CD8-positive, alpha-beta T cell (primary cell): ENCODE measurements at regions of chr1 and their contacts with region 1.

Region 1: DNA sequence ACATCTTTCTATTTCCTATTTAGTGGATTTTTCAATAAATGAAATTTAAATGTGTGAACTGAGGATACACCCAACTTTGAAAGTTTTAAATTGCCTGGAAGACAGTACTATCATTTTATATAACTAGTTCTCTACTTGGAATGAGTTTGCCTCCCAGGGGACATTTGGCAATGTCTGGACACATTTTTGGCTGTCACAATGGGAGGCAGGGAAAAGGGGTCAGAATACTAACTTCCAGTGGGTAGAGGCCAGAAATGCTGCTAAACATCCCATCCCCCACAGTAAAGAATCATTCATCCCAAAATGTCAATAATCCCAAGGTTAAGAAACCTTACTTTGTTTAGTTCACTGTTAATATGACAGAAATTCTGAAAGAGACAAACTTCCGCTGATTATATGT is 13.2 kb upstream of the NRAS start:
- DNase-seq: no peak
- ATAC-seq: no peak
- H3K4me3 ChIP-seq: no peak overlapping the region
- H3K4me3 Mint-ChIP-seq: no peak overlapping the region
- H3K27ac ChIP-seq: no peak overlapping the region
- H3K27ac Mint-ChIP-seq: no peak overlapping the region
- H3K4me1 ChIP-seq: no peaks in the 10 kb centered on the region
- H3K4me1 Mint-ChIP-seq: peaks cover 2% of the 10 kb centered on the region
- H3K27me3 ChIP-seq: no peaks in the 10 kb centered on the region
- H3K27me3 Mint-ChIP-seq: no peaks in the 10 kb centered on the region
- CTCF ChIP-seq: no peak

Region 2: DNA sequence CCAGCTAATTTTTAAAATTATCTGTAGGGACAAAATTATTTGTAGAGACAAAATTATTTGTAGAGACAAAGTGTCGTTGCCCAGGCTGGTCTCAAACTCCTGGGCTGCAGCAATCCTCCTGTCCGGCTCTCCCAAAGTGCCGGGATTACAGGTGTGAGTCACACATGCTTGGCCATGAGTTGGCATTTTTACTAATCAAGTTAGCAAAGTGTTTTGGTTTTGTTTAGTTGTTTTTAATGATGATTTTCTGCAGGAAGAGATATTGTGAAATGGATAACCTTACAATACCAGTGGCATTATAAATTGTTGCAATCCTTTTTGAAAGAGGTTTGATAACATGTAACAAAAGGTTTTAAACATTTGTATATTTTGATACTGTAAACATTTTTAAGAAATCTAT is 1404.7 kb before region 1 on chr1:
- CTCF ChIA-PET with region 1: no interaction called
- POLR2A ChIA-PET with region 1: no interaction called
- intact Hi-C with region 1: no loop called
- DNase-seq: no peak
- ATAC-seq: no peak
- H3K4me3 ChIP-seq: no peak overlapping the region
- H3K4me3 Mint-ChIP-seq: no peak overlapping the region
- H3K27ac ChIP-seq: no peak overlapping the region
- H3K27ac Mint-ChIP-seq: no peak overlapping the region
- H3K4me1 ChIP-seq: no peaks in the 10 kb centered on the region
- H3K4me1 Mint-ChIP-seq: no peaks in the 10 kb centered on the region
- H3K27me3 ChIP-seq: no peaks in the 10 kb centered on the region
- H3K27me3 Mint-ChIP-seq: no peaks in the 10 kb centered on the region
- CTCF ChIP-seq: no peak

Region 3: GRCh38 chr1:114691061-114691460 is 38.7 kb before region 1 on chr1:
- CTCF ChIA-PET with region 1: no interaction called
- POLR2A ChIA-PET with region 1: no interaction called
- intact Hi-C with region 1: no loop called
- DNase-seq: no peak
- ATAC-seq: no peak
- H3K4me3 ChIP-seq: no peak overlapping the region
- H3K4me3 Mint-ChIP-seq: no peak overlapping the region
- H3K27ac ChIP-seq: no peak overlapping the region
- H3K27ac Mint-ChIP-seq: no peak overlapping the region
- H3K4me1 ChIP-seq: no peaks in the 10 kb centered on the region
- H3K4me1 Mint-ChIP-seq: no peaks in the 10 kb centered on the region
- H3K27me3 ChIP-seq: peaks cover 5 to 7% of the 10 kb centered on the region in 2 experiments
- H3K27me3 Mint-ChIP-seq: peaks cover 27% of the 10 kb centered on the region
- CTCF ChIP-seq: no peak

Region 4: GRCh38 chr1:114741963-114742746 is 12.4 kb after region 1 on chr1:
- CTCF ChIA-PET with region 1: no interaction called
- POLR2A ChIA-PET with region 1: no interaction called
- intact Hi-C with region 1: loop called in 1 of 2 experiments (anchors 2 kb)
- DNase-seq: no peak
- ATAC-seq: no peak
- H3K4me3 ChIP-seq: no peak overlapping the region
- H3K4me3 Mint-ChIP-seq: no peak overlapping the region
- H3K27ac ChIP-seq: no peak overlapping the region
- H3K27ac Mint-ChIP-seq: peak overlapping the region; percentile 30
- H3K4me1 ChIP-seq: peaks cover 16% of the 10 kb centered on the region
- H3K4me1 Mint-ChIP-seq: peaks cover 70% of the 10 kb centered on the region
- H3K27me3 ChIP-seq: no peaks in the 10 kb centered on the region
- H3K27me3 Mint-ChIP-seq: no peaks in the 10 kb centered on the region
- CTCF ChIP-seq: no peak